MCF 10A (cell line): ENCODE measurements at regions of chr17 and their contacts with region 1.

Region 1: GRCh38 chr17:60392042-60392844 is at the start of gene USP32:
- DNase-seq: peak; percentile 98
- H3K4me3 Mint-ChIP-seq: peak within 1 kb of the TSS; percentile 88
- H3K27ac Mint-ChIP-seq: peak within 1 kb of the TSS; percentile 94
- H3K4me1 Mint-ChIP-seq: peaks cover 26% of the 10 kb centered on the region
- H3K27me3 Mint-ChIP-seq: no peaks in the 10 kb centered on the region
- CTCF ChIP-seq: peak; percentile 41
- total RNA-seq, gene USP32: 52.2 and 62.9 TPM in 2 replicates

Region 2: DNA sequence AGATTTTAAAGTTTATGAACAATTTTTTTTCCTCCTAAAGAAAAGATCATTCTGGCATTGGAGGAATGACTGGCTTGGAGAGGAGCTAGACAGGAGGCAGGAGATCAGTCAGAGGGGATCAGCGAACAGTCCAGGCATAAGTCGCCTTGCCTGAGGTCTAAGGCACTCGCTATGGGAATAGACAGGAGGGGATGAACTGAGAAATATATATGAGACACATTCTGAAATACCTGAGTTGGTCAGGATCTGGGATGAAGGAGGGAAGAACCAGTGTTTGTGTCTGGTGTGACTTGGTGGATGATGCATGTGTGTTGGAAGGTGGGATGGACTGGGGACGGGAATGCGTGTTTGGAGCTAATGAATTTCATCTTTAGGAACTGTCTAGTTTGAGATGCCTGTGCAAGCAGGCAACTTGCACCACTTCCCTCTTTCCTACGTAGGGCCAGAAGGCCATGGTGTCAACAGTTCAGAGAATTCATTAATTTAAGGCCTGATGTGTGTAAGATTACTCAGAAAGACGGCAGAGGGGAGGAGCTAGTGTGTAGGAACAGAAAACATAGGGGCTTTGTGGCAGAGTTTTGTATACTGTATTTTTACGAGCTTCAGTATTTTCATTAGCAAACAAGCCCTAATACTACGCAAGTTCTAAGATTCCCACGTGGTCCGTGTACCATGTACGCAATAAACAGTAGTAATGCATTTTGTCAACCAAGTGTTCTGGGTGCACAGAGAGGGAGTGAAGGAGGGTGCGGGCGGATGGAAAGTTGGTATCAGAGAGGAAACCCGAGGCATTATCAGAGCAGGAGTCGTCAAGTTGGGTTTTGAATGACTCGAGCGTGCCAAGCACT is 314.3 kb before region 1 on chr17:
- CTCF ChIA-PET with region 1: no interaction called
- POLR2A ChIA-PET with region 1: interaction called, 10 read pairs
- intact Hi-C with region 1: no loop called
- DNase-seq: no peak
- H3K4me3 Mint-ChIP-seq: peak overlapping the region; percentile 85
- H3K27ac Mint-ChIP-seq: peak overlapping the region; percentile 69
- H3K4me1 Mint-ChIP-seq: peaks cover 30% of the 10 kb centered on the region
- H3K27me3 Mint-ChIP-seq: no peaks in the 10 kb centered on the region
- CTCF ChIP-seq: no peak

Region 3: GRCh38 chr17:60231234-60231633 is 161.0 kb before region 1 on chr17:
- CTCF ChIA-PET with region 1: interaction called, 3 read pairs
- POLR2A ChIA-PET with region 1: interaction called, 5 read pairs
- intact Hi-C with region 1: loop called (anchors 5 kb)
- DNase-seq: peak; percentile 43
- H3K4me3 Mint-ChIP-seq: no peak overlapping the region
- H3K27ac Mint-ChIP-seq: no peak overlapping the region
- H3K4me1 Mint-ChIP-seq: peaks cover 6% of the 10 kb centered on the region
- H3K27me3 Mint-ChIP-seq: no peaks in the 10 kb centered on the region
- CTCF ChIP-seq: peak; percentile 47

Region 4: DNA sequence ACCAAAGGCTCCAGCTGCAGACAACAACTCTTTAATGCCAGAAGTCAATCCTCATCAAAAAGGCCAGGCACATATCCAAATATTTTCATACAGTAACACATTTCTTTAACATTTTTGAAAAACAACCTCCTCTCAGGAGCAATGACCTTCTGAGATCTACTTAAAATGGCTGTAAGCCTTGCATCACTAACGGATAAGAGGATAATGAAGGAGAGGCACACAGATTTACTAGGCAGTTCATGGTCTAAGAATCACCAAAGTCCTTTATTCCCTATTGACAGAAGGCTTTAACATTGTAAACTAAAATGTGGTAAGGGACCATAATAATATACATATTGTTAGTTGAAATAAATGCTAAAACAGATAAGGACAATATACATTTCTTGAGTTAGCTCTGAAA is 115.0 kb before region 1 on chr17:
- CTCF ChIA-PET with region 1: no interaction called
- POLR2A ChIA-PET with region 1: interaction called, 23 read pairs
- intact Hi-C with region 1: loop called (anchors 10 kb)
- DNase-seq: no peak
- H3K4me3 Mint-ChIP-seq: no peak overlapping the region
- H3K27ac Mint-ChIP-seq: no peak overlapping the region
- H3K4me1 Mint-ChIP-seq: peaks cover 20% of the 10 kb centered on the region
- H3K27me3 Mint-ChIP-seq: no peaks in the 10 kb centered on the region
- CTCF ChIP-seq: no peak

Region 5: GRCh38 chr17:60305141-60305540 is 87.1 kb before region 1 on chr17:
- CTCF ChIA-PET with region 1: no interaction called
- POLR2A ChIA-PET with region 1: no interaction called
- intact Hi-C with region 1: loop called (anchors 10 kb)
- DNase-seq: no peak
- H3K4me3 Mint-ChIP-seq: no peak overlapping the region
- H3K27ac Mint-ChIP-seq: no peak overlapping the region
- H3K4me1 Mint-ChIP-seq: peaks cover 11% of the 10 kb centered on the region
- H3K27me3 Mint-ChIP-seq: no peaks in the 10 kb centered on the region
- CTCF ChIP-seq: no peak

Region 6: GRCh38 chr17:60354223-60354622 is 38.0 kb before region 1 on chr17:
- CTCF ChIA-PET with region 1: interaction called, 7 read pairs
- POLR2A ChIA-PET with region 1: interaction called, 163 read pairs
- intact Hi-C with region 1: loop called (anchors 2 kb)
- DNase-seq: peak; percentile 83
- H3K4me3 Mint-ChIP-seq: peak overlapping the region; percentile 5
- H3K27ac Mint-ChIP-seq: peak overlapping the region; percentile 46
- H3K4me1 Mint-ChIP-seq: peaks cover 33% of the 10 kb centered on the region
- H3K27me3 Mint-ChIP-seq: no peaks in the 10 kb centered on the region
- CTCF ChIP-seq: no peak

Region 7: GRCh38 chr17:60372790-60373483 is 19.3 kb before region 1 on chr17:
- CTCF ChIA-PET with region 1: interaction called, 4 read pairs
- POLR2A ChIA-PET with region 1: interaction called, 152 read pairs
- intact Hi-C with region 1: no loop called
- DNase-seq: peak; percentile 77
- H3K4me3 Mint-ChIP-seq: peak overlapping the region; percentile 44
- H3K27ac Mint-ChIP-seq: peak overlapping the region; percentile 88
- H3K4me1 Mint-ChIP-seq: peaks cover 15% of the 10 kb centered on the region
- H3K27me3 Mint-ChIP-seq: no peaks in the 10 kb centered on the region
- CTCF ChIP-seq: no peak